CD4-positive, alpha-beta memory T cell (primary cell): ENCODE measurements at regions of chr9 and their contacts with region 1.

Region 1: GRCh38 chr9:35116898-35117551 is 1.4 kb upstream of the ATOSB start:
- DNase-seq: peak; percentile 86 to 91 (median 89)
- H3K4me3 ChIP-seq: peak overlapping the region; percentile 86 to 88
- H3K4me3 Mint-ChIP-seq: peak overlapping the region; percentile 89 to 95 (median 93)
- H3K27ac ChIP-seq: peak overlapping the region; percentile 68
- H3K27ac Mint-ChIP-seq: peak overlapping the region; percentile 92 to 99 (median 96)
- H3K4me1 ChIP-seq: peaks cover 42% of the 10 kb centered on the region
- H3K4me1 Mint-ChIP-seq: peaks cover 29 to 47% (median 35%) of the 10 kb centered on the region in 4 donors
- H3K27me3 ChIP-seq: no peaks in the 10 kb centered on the region
- H3K27me3 Mint-ChIP-seq: no peaks in the 10 kb centered on the region

Region 2: DNA sequence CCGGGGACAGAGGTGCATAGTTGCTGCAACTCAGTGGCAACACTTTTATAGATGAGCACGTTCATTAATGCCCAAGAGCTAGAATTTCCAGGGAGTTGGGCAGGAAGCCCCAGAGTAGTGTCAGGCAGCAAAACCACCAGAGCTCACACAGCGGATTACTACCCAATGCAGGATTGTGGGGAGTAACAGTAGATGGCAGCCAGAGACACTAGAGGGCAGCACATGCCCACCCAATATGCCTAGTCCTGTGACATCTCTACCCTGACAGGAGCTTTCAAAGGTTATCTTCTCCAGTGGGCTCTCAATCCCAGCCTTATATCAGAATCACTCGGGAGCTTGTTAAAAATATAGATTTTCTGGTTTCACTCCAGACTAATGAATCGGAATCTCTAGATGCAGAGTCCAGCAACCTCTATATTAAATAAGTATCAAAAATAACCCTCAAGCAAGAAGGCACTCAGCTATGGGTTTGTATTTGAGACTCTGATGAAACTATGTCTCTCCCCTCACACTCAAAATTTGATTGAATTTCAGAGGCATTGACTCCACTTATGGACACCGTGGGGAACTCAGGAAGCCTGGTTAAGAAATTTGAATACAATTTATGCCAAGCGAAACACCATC is 217.4 kb before region 1 on chr9:
- CTCF ChIA-PET with region 1: interaction called, 9 read pairs
- POLR2A ChIA-PET with region 1: no interaction called
- intact Hi-C with region 1: loop called (anchors 1 kb)
- DNase-seq: peak; percentile 73 to 78 (median 77)
- H3K4me3 ChIP-seq: no peak overlapping the region
- H3K4me3 Mint-ChIP-seq: no peak overlapping the region
- H3K27ac ChIP-seq: no peak overlapping the region
- H3K27ac Mint-ChIP-seq: no peak overlapping the region
- H3K4me1 ChIP-seq: no peaks in the 10 kb centered on the region
- H3K4me1 Mint-ChIP-seq: no peaks in the 10 kb centered on the region
- H3K27me3 ChIP-seq: no peaks in the 10 kb centered on the region
- H3K27me3 Mint-ChIP-seq: peaks cover 29 to 30% of the 10 kb centered on the region in 2 donors

Region 3: GRCh38 chr9:35096035-35096849 is 20.8 kb before region 1 on chr9 and contains the start of gene PIGO:
- CTCF ChIA-PET with region 1: interaction called, 18 read pairs
- POLR2A ChIA-PET with region 1: interaction called, 38 read pairs
- intact Hi-C with region 1: loop called (anchors 1 kb)
- DNase-seq: peak; percentile 89 to 92 (median 92)
- H3K4me3 ChIP-seq: peak within 1 kb of the TSS; percentile 87
- H3K4me3 Mint-ChIP-seq: peak within 1 kb of the TSS; percentile 85 to 91 (median 86)
- H3K27ac ChIP-seq: peak within 1 kb of the TSS; percentile 92
- H3K27ac Mint-ChIP-seq: peak within 1 kb of the TSS; percentile 91 to 99 (median 94)
- H3K4me1 ChIP-seq: peaks cover 15% of the 10 kb centered on the region
- H3K4me1 Mint-ChIP-seq: peaks cover 17 to 60% (median 34%) of the 10 kb centered on the region in 4 donors
- H3K27me3 ChIP-seq: no peaks in the 10 kb centered on the region
- H3K27me3 Mint-ChIP-seq: no peaks in the 10 kb centered on the region
- total RNA-seq, gene PIGO: 23.4 to 29.7 TPM

Region 4: DNA sequence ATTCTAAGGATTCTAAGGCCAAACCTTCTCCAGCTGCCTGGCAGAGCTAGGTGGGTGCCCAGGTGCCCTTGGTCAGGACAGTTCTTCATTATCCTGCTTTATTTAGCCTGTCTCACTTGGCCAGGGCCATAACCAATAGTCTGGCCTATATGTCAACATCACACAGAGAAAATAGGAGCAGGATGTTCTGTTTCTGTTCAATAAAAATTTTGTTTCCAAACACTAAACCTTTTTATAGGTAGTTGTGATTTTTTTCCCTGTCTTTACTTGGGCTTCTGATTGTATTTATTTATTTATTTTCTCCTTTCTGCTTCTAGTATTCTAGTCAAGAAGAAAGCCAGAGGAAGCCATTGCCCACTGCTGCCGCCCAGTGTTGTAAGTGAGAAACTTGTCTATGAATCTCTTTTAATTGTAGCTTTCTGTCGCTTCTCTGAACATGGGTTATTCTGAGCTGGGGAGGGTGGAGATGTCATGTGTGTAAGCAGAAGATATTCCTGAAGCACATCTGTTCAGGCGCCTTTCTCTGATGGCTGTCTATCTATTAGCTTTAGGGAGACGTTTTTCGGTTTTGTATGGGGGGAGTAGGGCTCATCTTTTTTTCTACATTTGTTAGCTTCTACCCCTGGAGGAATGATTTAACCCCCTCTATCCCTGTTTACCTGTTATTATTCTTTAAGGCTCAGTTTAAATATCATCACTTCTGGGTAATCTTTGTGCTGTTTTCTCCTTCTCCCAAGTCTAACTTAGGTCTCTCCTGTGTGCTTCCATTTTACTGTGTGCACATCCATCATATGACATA is 141.8 kb after region 1 on chr9:
- CTCF ChIA-PET with region 1: interaction called, 41 read pairs
- POLR2A ChIA-PET with region 1: interaction called, 3 read pairs
- intact Hi-C with region 1: no loop called
- DNase-seq: peak; percentile 35 to 43 (median 39)
- H3K4me3 ChIP-seq: no peak overlapping the region
- H3K4me3 Mint-ChIP-seq: no peak overlapping the region
- H3K27ac ChIP-seq: no peak overlapping the region
- H3K27ac Mint-ChIP-seq: peak overlapping the region in 1 of 7 donors; percentile 25
- H3K4me1 ChIP-seq: no peaks in the 10 kb centered on the region
- H3K4me1 Mint-ChIP-seq: no peaks in the 10 kb centered on the region
- H3K27me3 ChIP-seq: no peaks in the 10 kb centered on the region
- H3K27me3 Mint-ChIP-seq: peaks cover 0 to 1% of the 10 kb centered on the region in 2 donors

Region 5: DNA sequence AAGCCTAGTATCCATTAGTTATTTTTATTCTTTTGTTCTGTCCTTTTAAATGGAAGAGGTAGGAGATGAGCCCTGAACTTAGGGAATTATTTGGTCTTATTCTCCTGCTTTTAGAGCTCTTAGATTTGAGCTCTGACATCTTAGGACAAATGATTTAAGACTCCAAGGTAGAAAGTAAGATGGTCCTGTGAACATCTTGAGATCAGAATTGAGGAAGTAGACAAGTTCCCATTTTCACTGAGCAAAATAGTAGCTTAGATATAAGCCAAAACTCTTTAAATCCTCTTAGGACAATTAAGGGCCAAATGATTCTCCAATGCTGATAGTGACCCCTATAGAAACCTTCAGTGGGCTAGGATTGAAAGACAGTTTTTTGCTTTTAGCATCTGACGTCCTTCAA is 319.9 kb after region 1 on chr9:
- CTCF ChIA-PET with region 1: no interaction called
- POLR2A ChIA-PET with region 1: no interaction called
- intact Hi-C with region 1: no loop called
- DNase-seq: no peak
- H3K4me3 ChIP-seq: no peak overlapping the region
- H3K4me3 Mint-ChIP-seq: no peak overlapping the region
- H3K27ac ChIP-seq: no peak overlapping the region
- H3K27ac Mint-ChIP-seq: no peak overlapping the region
- H3K4me1 ChIP-seq: no peaks in the 10 kb centered on the region
- H3K4me1 Mint-ChIP-seq: no peaks in the 10 kb centered on the region
- H3K27me3 ChIP-seq: no peaks in the 10 kb centered on the region
- H3K27me3 Mint-ChIP-seq: peaks cover 2 to 8% of the 10 kb centered on the region in 2 donors

Region 6: DNA sequence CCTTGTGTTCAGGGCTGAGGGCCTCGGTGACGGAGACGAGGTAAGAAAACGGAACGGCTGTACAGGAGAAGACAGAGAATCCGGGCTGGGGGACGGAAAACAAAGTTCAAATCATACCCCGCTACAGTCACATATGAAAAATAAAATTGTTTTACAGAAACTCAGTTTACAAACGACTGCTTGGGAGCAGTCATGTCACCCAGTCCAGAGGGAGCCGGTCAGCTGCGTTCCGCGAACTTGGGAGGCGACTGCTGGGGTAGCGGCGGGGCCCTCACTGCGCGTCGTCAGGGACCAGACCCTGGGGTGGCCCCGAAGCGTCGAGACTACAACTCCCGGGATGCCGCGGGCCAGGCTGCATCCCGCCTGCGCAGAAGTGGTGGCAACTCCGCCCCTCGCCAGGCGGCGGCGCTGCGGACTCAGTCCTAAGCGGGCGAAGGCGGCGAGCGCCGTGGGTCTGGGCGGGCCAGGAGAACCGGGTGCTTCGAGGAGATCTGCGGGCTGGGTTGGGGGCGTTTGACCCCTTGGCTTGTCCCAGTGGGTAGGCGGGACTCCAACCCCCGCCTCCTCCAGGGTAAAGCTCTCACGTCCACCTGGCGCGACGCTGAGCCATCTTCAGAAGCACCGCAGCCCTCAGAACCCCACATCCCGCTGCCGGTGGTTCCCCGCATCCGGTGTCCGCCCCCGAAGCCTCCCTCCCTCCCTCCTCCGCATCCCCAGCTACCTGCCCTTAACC is 529.7 kb after region 1 on chr9:
- CTCF ChIA-PET with region 1: interaction called, 3 read pairs
- POLR2A ChIA-PET with region 1: interaction called, 3 read pairs
- intact Hi-C with region 1: loop called (anchors 5 kb)
- DNase-seq: peak; percentile 91 to 95 (median 91)
- H3K4me3 ChIP-seq: peak overlapping the region; percentile 78 to 96
- H3K4me3 Mint-ChIP-seq: peak overlapping the region; percentile 93 to 98 (median 94)
- H3K27ac ChIP-seq: peak overlapping the region; percentile 88
- H3K27ac Mint-ChIP-seq: peak overlapping the region; percentile 89 to 99 (median 97)
- H3K4me1 ChIP-seq: peaks cover 56% of the 10 kb centered on the region
- H3K4me1 Mint-ChIP-seq: peaks cover 29 to 87% (median 47%) of the 10 kb centered on the region in 4 donors
- H3K27me3 ChIP-seq: no peaks in the 10 kb centered on the region
- H3K27me3 Mint-ChIP-seq: no peaks in the 10 kb centered on the region